ENCODE measurements at regions of chr12 and their contacts with region 1.

Region 1: DNA sequence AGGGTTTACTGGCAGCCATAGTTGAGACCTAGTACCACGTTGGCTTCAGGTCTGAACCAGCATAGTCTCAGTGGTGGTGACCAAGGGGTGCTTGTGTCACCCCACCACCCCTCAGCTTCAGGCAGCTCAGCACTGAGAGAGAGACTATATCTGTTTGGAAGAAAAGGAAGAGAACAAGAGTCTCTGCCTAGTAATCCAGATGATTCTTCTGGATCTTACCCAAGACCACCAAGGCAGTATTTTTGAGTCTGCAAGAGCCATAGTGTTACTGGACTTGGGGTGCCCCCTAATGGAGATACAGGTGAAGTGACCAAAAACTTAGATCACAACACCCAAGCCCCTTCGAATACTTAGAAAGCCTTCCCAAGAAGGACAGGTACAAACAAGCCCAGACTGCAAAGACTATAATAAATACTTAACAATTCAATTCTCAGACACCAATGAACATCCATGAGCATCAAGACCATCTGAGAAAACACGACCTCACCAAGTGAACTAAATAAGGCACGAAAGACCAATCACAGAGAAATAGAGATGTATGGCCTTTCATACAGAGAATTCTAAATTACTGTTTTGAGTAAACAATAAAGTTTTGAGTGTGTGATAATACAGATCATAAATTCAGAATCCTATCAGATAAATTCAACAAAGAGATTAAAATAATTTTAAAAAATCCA is 107.0 kb downstream of the HELB start:
- DNase-seq: peak; percentile 85
- H3K4me3 Mint-ChIP-seq: no peak overlapping the region
- H3K27ac Mint-ChIP-seq: no peak overlapping the region
- H3K4me1 Mint-ChIP-seq: no peaks in the 10 kb centered on the region
- H3K27me3 Mint-ChIP-seq: peaks cover 25% of the 10 kb centered on the region

Region 2: GRCh38 chr12:66144791-66145754 is 264.3 kb before region 1 on chr12:
- intact Hi-C with region 1: loop called (anchors 1 kb)
- DNase-seq: peak; percentile 64
- H3K4me3 Mint-ChIP-seq: no peak overlapping the region
- H3K27ac Mint-ChIP-seq: peak overlapping the region; percentile 54
- H3K4me1 Mint-ChIP-seq: peaks cover 18% of the 10 kb centered on the region
- H3K27me3 Mint-ChIP-seq: no peaks in the 10 kb centered on the region

Region 3: DNA sequence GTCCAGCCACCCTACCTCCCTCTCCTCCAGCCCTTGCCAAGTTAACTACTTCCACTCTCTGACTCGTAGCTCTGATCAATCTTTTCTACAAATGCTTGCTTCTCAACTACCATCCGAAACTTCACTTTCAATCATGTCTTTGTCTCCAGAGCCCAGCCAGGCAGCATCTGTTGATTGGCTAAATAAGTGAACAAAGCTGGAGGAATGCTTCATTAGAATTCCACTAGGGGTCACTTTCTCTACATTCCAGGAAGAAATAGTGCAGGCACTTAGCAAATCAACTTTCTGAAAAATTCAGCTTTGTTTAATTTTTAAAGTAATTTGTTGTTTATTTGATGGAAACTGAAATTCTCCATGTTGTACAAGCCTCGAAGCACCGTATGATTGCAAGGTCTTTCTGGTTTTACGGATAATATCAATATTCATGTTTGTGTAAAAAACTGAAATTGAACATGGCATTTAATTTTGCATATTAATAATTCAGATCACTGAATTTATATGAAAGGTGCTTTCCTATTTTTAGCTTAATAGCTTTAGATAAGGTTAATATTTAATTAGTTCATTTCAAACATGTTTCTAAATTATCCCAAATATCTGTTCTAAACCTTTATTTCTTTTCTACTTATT is 139.5 kb before region 1 on chr12:
- intact Hi-C with region 1: loop called (anchors 1 kb)
- DNase-seq: peak; percentile 74
- H3K4me3 Mint-ChIP-seq: no peak overlapping the region
- H3K27ac Mint-ChIP-seq: no peak overlapping the region
- H3K4me1 Mint-ChIP-seq: peaks cover 6% of the 10 kb centered on the region
- H3K27me3 Mint-ChIP-seq: no peaks in the 10 kb centered on the region

Measured in activated CD4-positive, alpha-beta T cell treated with anti-CD3 and anti-CD28 coated beads, Interleukin-2, amount 10 ng/mL, durations not matched to agents 24 days and 14 days (primary cell).